Activated naive CD4-positive, alpha-beta T cell treated with anti-CD3 and anti-CD28 coated beads for 36 hours (primary cell): ENCODE measurements at regions of chr12 and their contacts with region 1.

Region 1: GRCh38 chr12:48903982-48904411 is 21.3 kb downstream of the FKBP11 start:
- DNase-seq: peak; percentile 92
- H3K4me3 Mint-ChIP-seq: peak overlapping the region; percentile 67
- H3K27ac Mint-ChIP-seq: no peak overlapping the region
- H3K4me1 Mint-ChIP-seq: peaks cover 6% of the 10 kb centered on the region
- H3K27me3 Mint-ChIP-seq: no peaks in the 10 kb centered on the region

Region 2: DNA sequence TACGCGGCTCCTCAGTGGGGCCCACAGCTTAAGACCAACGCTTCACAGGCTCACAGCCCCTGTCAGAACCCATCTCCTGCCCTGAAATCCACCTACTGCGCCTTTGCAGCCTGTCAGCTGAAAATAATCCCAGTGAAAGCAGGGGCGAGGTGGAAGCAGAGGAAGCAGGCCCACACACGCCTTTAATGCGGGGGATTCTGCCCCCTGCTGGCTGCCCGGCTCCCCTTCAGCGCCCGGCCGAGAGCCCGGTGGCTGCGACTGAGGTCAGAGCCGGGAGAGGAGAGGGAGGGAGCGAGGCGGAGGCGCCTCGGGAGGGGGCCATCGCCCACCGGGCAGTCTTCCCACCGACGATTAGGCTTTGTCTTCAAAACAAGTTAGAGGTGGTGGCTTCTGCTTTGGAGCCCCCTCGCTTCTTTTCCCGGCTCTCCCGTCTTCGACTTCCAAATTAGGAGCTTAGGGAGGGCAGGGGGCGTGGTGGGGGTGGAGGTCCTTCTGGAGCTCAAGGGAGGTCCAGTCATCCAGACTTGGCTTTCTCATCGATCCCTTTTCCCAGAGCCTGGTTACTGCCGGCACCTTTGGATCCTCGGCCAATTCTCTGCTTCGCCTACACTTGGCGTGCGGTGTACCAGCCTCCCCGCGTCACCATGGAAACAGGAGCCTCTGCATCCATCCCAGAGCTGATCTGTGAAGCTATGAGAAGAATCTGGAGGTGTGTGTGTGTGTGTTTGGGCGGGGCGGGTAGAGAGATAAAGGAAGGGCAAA is 13.2 kb before region 1 on chr12:
- CTCF ChIA-PET with region 1: interaction called, 48 read pairs
- intact Hi-C with region 1: no loop called
- DNase-seq: peak; percentile 86
- H3K4me3 Mint-ChIP-seq: peak overlapping the region; percentile 24
- H3K27ac Mint-ChIP-seq: no peak overlapping the region
- H3K4me1 Mint-ChIP-seq: peaks cover 5% of the 10 kb centered on the region
- H3K27me3 Mint-ChIP-seq: peaks cover 13% of the 10 kb centered on the region

Region 3: GRCh38 chr12:48924617-48925303 is 20.8 kb after region 1 on chr12:
- CTCF ChIA-PET with region 1: interaction called, 26 read pairs
- intact Hi-C with region 1: no loop called
- DNase-seq: peak; percentile 81
- H3K4me3 Mint-ChIP-seq: peak overlapping the region; percentile 91
- H3K27ac Mint-ChIP-seq: peak overlapping the region; percentile 96
- H3K4me1 Mint-ChIP-seq: peaks cover 49% of the 10 kb centered on the region
- H3K27me3 Mint-ChIP-seq: no peaks in the 10 kb centered on the region

Region 4: GRCh38 chr12:48936379-48936979 is 32.5 kb after region 1 on chr12:
- CTCF ChIA-PET with region 1: interaction called, 27 read pairs
- intact Hi-C with region 1: loop called (anchors 1 kb)
- DNase-seq: peak; percentile 90
- H3K4me3 Mint-ChIP-seq: no peak overlapping the region
- H3K27ac Mint-ChIP-seq: peak overlapping the region; percentile 47
- H3K4me1 Mint-ChIP-seq: peaks cover 10% of the 10 kb centered on the region
- H3K27me3 Mint-ChIP-seq: no peaks in the 10 kb centered on the region

Region 5: DNA sequence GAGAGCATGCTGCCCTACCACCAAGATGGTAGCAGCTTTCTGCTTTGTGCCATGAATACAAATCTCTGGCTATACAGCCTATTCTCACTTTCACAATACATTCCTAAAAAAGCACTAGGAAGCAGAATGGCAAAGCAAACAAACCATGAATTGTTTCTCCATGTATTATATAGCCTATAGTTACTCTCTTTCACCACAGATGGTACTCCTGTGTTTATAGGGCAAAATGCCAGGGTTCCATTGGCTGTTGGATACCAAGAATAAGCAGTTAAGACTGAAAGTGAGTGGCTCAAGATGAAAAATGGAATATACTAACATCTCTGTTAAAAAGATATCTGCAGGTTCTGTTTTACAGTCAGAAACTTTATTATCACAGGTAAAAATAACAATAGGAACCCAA is 42.2 kb after region 1 on chr12:
- CTCF ChIA-PET with region 1: interaction called, 13 read pairs
- intact Hi-C with region 1: no loop called
- DNase-seq: no peak
- H3K4me3 Mint-ChIP-seq: no peak overlapping the region
- H3K27ac Mint-ChIP-seq: no peak overlapping the region
- H3K4me1 Mint-ChIP-seq: peaks cover 10% of the 10 kb centered on the region
- H3K27me3 Mint-ChIP-seq: no peaks in the 10 kb centered on the region

Region 6: GRCh38 chr12:48977315-48978281 is 73.6 kb after region 1 on chr12:
- CTCF ChIA-PET with region 1: interaction called, 15 read pairs
- intact Hi-C with region 1: no loop called
- DNase-seq: peak; percentile 83
- H3K4me3 Mint-ChIP-seq: peak overlapping the region; percentile 19
- H3K27ac Mint-ChIP-seq: no peak overlapping the region
- H3K4me1 Mint-ChIP-seq: peaks cover 44% of the 10 kb centered on the region
- H3K27me3 Mint-ChIP-seq: peaks cover 67% of the 10 kb centered on the region

Region 7: DNA sequence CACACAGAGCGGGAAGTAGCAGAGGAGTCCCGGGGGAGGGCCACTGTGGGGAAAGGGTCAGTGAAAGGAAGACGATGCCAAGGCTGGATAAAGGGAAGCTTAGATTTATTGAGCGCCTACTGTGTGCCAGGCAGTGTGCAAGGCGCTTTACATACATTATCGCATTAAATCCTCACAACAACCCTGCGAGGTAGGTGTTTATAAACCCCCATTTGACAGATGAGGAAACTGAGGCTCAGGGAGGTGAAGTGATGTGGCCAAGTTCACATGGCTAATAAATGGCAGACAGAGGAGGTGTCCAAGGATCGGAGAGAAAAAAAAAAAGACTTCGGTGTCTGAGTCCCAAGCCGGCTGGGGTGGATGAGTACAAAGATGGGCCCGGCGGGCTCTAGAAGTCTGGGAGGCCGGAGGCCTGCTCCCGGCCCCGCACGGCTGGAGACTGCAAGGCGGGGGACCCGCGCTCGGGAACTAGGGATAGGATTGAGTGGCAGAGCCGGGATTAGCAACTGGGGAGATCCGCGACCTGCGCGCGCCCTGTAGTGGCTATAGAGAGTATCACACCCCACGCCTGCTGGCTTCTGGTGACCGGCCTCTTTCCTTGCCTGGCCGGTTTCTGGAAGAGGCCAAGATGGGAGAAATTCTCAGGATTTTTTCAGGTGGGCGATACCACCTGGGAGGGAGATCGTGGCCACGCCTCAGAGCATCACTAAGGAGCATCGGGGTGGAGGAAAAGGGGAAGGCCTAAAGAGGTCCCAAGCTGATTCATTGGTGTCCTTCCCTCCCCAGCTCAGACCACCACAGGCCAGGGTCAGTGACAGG is 91.3 kb after region 1 on chr12:
- CTCF ChIA-PET with region 1: interaction called, 3 read pairs
- intact Hi-C with region 1: loop called (anchors 2 kb)
- DNase-seq: peak; percentile 69
- H3K4me3 Mint-ChIP-seq: peak overlapping the region; percentile 10
- H3K27ac Mint-ChIP-seq: no peak overlapping the region
- H3K4me1 Mint-ChIP-seq: peaks cover 33% of the 10 kb centered on the region
- H3K27me3 Mint-ChIP-seq: peaks cover 54% of the 10 kb centered on the region

Region 8: DNA sequence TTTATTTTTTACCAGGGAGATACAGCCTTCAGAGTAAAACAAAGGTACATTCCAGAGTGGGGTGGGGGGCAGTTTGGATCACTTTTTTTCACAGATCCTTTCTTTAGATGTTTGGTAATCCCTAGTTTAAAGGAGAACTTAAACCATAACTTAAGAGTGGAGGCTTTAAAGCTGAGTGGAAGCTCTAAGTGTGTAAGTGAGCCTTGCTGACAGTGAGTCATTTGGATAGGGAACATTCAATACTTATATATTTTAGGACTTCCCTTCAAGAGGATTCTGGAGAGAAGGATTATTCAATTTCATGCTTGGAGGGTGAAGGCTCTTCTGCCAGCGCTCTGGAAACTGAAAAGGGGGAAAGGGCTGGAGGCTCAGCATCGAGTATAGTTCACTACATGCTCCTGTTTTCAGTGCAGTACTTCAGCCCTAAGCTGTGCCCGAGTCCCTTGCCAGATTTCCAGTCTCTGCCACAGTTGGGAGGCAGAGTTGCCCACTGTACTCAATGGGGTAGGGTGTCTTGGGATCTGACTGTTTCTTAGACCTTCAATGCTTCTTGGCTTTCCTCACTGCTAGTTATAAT is 106.2 kb after region 1 on chr12:
- CTCF ChIA-PET with region 1: no interaction called
- intact Hi-C with region 1: no loop called
- DNase-seq: no peak
- H3K4me3 Mint-ChIP-seq: no peak overlapping the region
- H3K27ac Mint-ChIP-seq: no peak overlapping the region
- H3K4me1 Mint-ChIP-seq: peaks cover 2% of the 10 kb centered on the region
- H3K27me3 Mint-ChIP-seq: no peaks in the 10 kb centered on the region

Region 9: GRCh38 chr12:49025463-49025862 is 121.5 kb after region 1 on chr12:
- CTCF ChIA-PET with region 1: no interaction called
- intact Hi-C with region 1: no loop called
- DNase-seq: no peak
- H3K4me3 Mint-ChIP-seq: no peak overlapping the region
- H3K27ac Mint-ChIP-seq: no peak overlapping the region
- H3K4me1 Mint-ChIP-seq: no peaks in the 10 kb centered on the region
- H3K27me3 Mint-ChIP-seq: no peaks in the 10 kb centered on the region

Region 10: DNA sequence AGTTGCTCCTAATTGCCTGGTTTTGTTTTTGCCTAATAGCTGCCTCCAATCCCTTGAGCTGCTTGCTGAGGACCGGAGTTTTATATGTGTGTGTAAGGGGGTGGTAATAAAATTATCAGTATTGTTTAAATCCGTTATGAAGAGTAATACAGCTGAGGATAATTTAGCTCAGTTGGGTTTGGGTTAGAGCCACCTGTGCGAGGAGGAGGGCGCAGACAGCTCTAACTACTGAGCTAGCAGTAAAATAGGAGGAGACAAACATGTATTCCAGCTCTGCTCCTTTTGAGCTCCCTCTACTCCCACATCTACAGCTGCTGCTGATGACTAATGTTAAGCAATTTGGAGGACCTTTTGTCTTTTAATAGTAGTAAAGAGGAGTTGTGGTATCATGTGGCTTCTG is 524.8 kb after region 1 on chr12:
- CTCF ChIA-PET with region 1: no interaction called
- intact Hi-C with region 1: no loop called
- DNase-seq: no peak
- H3K4me3 Mint-ChIP-seq: no peak overlapping the region
- H3K27ac Mint-ChIP-seq: no peak overlapping the region
- H3K4me1 Mint-ChIP-seq: peaks cover 3% of the 10 kb centered on the region
- H3K27me3 Mint-ChIP-seq: no peaks in the 10 kb centered on the region